Vagina (tissue), 2 donors: ENCODE measurements at regions of chr21 and their contacts with region 1.

Region 1: GRCh38 chr21:28986677-28987076 is 6.0 kb downstream of the LTN1 start:
- DNase-seq: no peak
- H3K4me3 ChIP-seq: no peak overlapping the region
- H3K27ac ChIP-seq: no peak overlapping the region
- H3K4me1 ChIP-seq: peaks cover 20% of the 10 kb centered on the region
- H3K27me3 ChIP-seq: no peaks in the 10 kb centered on the region
- CTCF ChIP-seq: no peak
- POLR2A ChIP-seq: no peak

Region 2: GRCh38 chr21:28971171-28971570 is 15.5 kb before region 1 on chr21:
- intact Hi-C with region 1: loop called (anchors 1 kb)
- DNase-seq: no peak
- H3K4me3 ChIP-seq: no peak overlapping the region
- H3K27ac ChIP-seq: no peak overlapping the region
- H3K4me1 ChIP-seq: no peaks in the 10 kb centered on the region
- H3K27me3 ChIP-seq: no peaks in the 10 kb centered on the region
- CTCF ChIP-seq: no peak
- POLR2A ChIP-seq: no peak

Region 3: GRCh38 chr21:29073222-29074006 is 86.7 kb after region 1 on chr21 and contains the start of gene CCT8:
- intact Hi-C with region 1: no loop called
- DNase-seq: peak in 1 of 2 donors; percentile 99
- H3K4me3 ChIP-seq: peak within 1 kb of the TSS; percentile 90 to 98
- H3K27ac ChIP-seq: peak within 1 kb of the TSS; percentile 89
- H3K4me1 ChIP-seq: peaks cover 34% of the 10 kb centered on the region
- H3K27me3 ChIP-seq: no peaks in the 10 kb centered on the region
- CTCF ChIP-seq: no peak
- POLR2A ChIP-seq: peak in 1 of 2 donors; percentile 37
- total RNA-seq, gene CCT8: 81.3 TPM